Esophagus muscularis mucosa (tissue), 4 donors: ENCODE measurements at regions of chr22 and their contacts with region 1.

Region 1: DNA sequence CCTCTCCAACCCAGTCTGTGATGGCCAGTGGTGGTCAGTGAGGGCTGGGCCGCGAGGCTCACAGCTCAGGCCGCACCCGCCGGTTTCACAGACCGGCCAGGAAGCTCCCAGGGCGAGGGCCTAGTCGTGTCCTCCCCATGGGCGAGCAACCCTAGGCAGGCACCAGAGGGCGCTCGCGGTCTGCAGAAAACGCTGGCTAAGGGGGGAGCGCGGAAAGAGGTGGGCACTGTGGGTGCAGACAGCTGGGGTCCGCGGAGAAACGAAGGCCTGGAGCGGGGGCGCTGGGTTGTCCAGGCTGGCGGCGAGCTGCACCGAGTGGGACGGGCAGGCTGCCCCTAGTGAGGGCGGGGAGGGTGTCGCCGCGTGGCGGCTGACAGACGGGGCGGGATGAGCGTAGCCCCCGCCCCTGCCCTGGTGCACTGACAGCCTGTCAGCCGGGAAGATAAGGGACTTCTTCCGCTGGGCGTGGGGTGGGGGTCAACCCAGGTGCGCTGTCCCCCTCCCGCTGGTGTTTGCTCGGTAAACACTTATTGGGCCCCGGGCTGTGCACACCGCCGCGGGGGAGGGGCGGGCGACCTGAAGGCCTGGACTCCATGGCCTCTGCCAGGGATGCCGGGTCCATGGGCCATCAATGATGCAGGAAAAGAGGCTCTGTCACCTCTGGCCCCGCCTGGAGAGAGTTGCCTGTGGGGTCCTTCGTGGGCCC is 7.5 kb downstream of the GP1BB start:
- DNase-seq: peak; percentile 95
- H3K4me3 ChIP-seq: peak overlapping the region; percentile 42 to 55 (median 48)
- H3K27ac ChIP-seq: no peak overlapping the region
- H3K4me1 ChIP-seq: peaks cover 0 to 13% (median 11%) of the 10 kb centered on the region in 4 donors
- H3K27me3 ChIP-seq: peaks cover 0 to 18% (median 2%) of the 10 kb centered on the region in 4 donors
- CTCF ChIP-seq: peak; percentile 92 to 98 (median 93)
- EP300 ChIP-seq: no peak
- POLR2A ChIP-seq: no peak

Region 2: GRCh38 chr22:19648419-19648929 is 82.3 kb before region 1 on chr22:
- intact Hi-C with region 1: no loop called
- DNase-seq: no peak
- H3K4me3 ChIP-seq: no peak overlapping the region
- H3K27ac ChIP-seq: no peak overlapping the region
- H3K4me1 ChIP-seq: no peaks in the 10 kb centered on the region
- H3K27me3 ChIP-seq: peaks cover 0 to 40% (median 0%) of the 10 kb centered on the region in 4 donors
- CTCF ChIP-seq: no peak
- EP300 ChIP-seq: no peak
- POLR2A ChIP-seq: no peak

Region 3: GRCh38 chr22:19909350-19910179 is 178.8 kb after region 1 on chr22:
- intact Hi-C with region 1: loop called (anchors 1 kb)
- DNase-seq: peak; percentile 94
- H3K4me3 ChIP-seq: no peak overlapping the region
- H3K27ac ChIP-seq: no peak overlapping the region
- H3K4me1 ChIP-seq: peaks cover 0 to 5% (median 2%) of the 10 kb centered on the region in 4 donors
- H3K27me3 ChIP-seq: no peaks in the 10 kb centered on the region
- CTCF ChIP-seq: peak; percentile 85 to 89 (median 86)
- EP300 ChIP-seq: no peak
- POLR2A ChIP-seq: no peak